ENCODE measurements at regions of chr9 and their contacts with region 1.

Region 1: DNA sequence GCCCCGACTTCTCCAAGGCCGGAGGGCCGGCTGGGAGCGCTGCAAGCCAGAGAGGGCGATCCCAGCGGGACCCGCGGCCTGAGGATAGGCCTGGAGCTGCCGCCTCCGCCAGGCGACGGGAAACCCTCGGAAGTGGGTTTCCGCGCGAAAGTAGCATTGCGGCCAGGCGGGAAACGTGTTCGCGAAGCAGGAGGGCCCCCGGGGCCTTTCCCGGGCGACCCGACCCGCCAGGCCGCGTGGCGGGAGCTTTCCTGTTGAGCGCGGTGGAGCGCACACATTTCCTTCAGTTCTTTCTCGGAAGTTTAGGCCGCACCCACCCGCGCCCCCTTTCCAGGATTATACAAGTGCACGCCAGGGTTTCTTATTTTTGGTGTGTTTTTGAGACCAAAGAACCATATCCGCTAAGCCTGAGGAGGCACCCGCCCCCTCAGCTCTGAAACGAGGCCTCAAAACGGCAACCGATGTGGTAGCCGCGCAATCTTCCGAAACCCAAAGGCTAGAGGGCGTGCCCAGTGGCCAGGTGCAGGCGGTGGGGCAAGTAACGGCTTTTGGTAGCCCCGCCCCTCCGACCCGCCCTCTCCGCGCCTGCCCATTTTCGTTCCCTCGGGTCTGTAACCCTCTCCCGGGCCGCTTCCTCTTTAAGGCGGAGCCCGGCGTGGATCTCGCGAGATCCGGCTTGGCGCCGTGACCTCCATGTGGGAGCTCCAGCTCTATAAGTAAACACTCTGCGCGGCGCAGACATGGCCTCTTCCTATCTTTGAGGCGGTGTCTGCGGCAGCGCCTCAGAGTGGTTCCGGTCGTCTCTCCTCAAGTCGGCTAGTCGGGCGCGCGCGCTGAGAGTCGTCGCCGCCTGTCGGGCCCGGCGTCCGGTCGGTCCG is at the start of gene UHRF2:
- DNase-seq: peak; percentile 97
- H3K4me3 ChIP-seq: peak within 1 kb of the TSS; percentile 53 to 100 (median 98)
- H3K27ac ChIP-seq: peak within 1 kb of the TSS; percentile 91
- H3K4me1 ChIP-seq: peaks cover 24% of the 10 kb centered on the region
- H3K27me3 ChIP-seq: peaks cover 0 to 3% of the 10 kb centered on the region in 2 experiments
- CTCF ChIP-seq: peak in 1 of 2 donors; percentile 4
- POLR2A ChIP-seq: peak; percentile 89
- total RNA-seq, gene UHRF2: 101 and 106 TPM in 2 replicates

Region 2: GRCh38 chr9:6008169-6008979 is 404.4 kb before region 1 on chr9:
- CTCF ChIA-PET with region 1: no interaction called
- POLR2A ChIA-PET with region 1: no interaction called
- dilution Hi-C with region 1: no loop called
- intact Hi-C with region 1: loop called (anchors 5 kb)
- DNase-seq: peak; percentile 98
- H3K4me3 ChIP-seq: peak overlapping the region; percentile 65 to 98 (median 89)
- H3K27ac ChIP-seq: peak overlapping the region; percentile 60
- H3K4me1 ChIP-seq: peaks cover 22% of the 10 kb centered on the region
- H3K27me3 ChIP-seq: no peaks in the 10 kb centered on the region
- CTCF ChIP-seq: no peak
- POLR2A ChIP-seq: peak; percentile 50

Region 3: GRCh38 chr9:6024020-6024554 is 388.6 kb before region 1 on chr9:
- CTCF ChIA-PET with region 1: no interaction called
- POLR2A ChIA-PET with region 1: no interaction called
- dilution Hi-C with region 1: no loop called
- intact Hi-C with region 1: no loop called
- DNase-seq: peak; percentile 22
- H3K4me3 ChIP-seq: peak overlapping the region in 1 of 3 experiments; percentile 11
- H3K27ac ChIP-seq: no peak overlapping the region
- H3K4me1 ChIP-seq: no peaks in the 10 kb centered on the region
- H3K27me3 ChIP-seq: peaks cover 1 to 13% of the 10 kb centered on the region in 2 experiments
- CTCF ChIP-seq: peak; percentile 46 to 48
- POLR2A ChIP-seq: no peak

Region 4: DNA sequence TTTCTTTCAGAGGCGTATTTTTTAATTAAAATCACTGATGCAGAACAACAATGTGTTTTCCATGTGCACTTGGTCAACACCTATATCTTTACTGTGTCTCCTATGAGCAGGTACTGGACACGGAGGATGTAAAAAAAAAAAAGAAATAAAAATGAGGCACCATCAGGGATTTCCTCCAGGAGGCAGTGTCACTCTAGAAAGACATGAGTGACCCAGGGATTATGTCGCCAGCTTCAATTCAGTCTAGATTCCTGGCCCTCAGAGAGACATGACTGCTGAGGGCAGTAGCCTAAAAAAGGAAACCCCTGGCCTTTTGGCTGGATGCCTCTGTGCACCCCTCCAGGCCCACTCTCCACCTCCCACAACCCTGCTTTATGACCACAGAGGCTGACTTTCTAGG is 215.4 kb before region 1 on chr9:
- CTCF ChIA-PET with region 1: no interaction called
- POLR2A ChIA-PET with region 1: no interaction called
- dilution Hi-C with region 1: no loop called
- intact Hi-C with region 1: loop called (anchors 10 kb)
- DNase-seq: peak; percentile 67
- H3K4me3 ChIP-seq: no peak overlapping the region
- H3K27ac ChIP-seq: no peak overlapping the region
- H3K4me1 ChIP-seq: peaks cover 18% of the 10 kb centered on the region
- H3K27me3 ChIP-seq: no peaks in the 10 kb centered on the region
- CTCF ChIP-seq: peak; percentile 29 to 42
- POLR2A ChIP-seq: no peak

Region 5: GRCh38 chr9:6353851-6354686 is 58.7 kb before region 1 on chr9:
- CTCF ChIA-PET with region 1: interaction called, 20 read pairs
- POLR2A ChIA-PET with region 1: no interaction called
- dilution Hi-C with region 1: no loop called
- intact Hi-C with region 1: loop called (anchors 2 kb)
- DNase-seq: peak; percentile 72
- H3K4me3 ChIP-seq: no peak overlapping the region
- H3K27ac ChIP-seq: no peak overlapping the region
- H3K4me1 ChIP-seq: peaks cover 4% of the 10 kb centered on the region
- H3K27me3 ChIP-seq: no peaks in the 10 kb centered on the region
- CTCF ChIP-seq: peak; percentile 67 to 69
- POLR2A ChIP-seq: no peak

Region 6: GRCh38 chr9:6449645-6450044 is 36.9 kb after region 1 on chr9:
- CTCF ChIA-PET with region 1: interaction called, 7 read pairs
- POLR2A ChIA-PET with region 1: no interaction called
- dilution Hi-C with region 1: no loop called
- intact Hi-C with region 1: loop called (anchors 2 kb)
- DNase-seq: peak; percentile 42
- H3K4me3 ChIP-seq: no peak overlapping the region
- H3K27ac ChIP-seq: peak overlapping the region; percentile 66
- H3K4me1 ChIP-seq: peaks cover 38% of the 10 kb centered on the region
- H3K27me3 ChIP-seq: no peaks in the 10 kb centered on the region
- CTCF ChIP-seq: no peak
- POLR2A ChIP-seq: no peak

Region 7: GRCh38 chr9:6488395-6488794 is 75.7 kb after region 1 on chr9:
- CTCF ChIA-PET with region 1: no interaction called
- POLR2A ChIA-PET with region 1: no interaction called
- dilution Hi-C with region 1: no loop called
- intact Hi-C with region 1: loop called (anchors 5 kb)
- DNase-seq: no peak
- H3K4me3 ChIP-seq: no peak overlapping the region
- H3K27ac ChIP-seq: no peak overlapping the region
- H3K4me1 ChIP-seq: no peaks in the 10 kb centered on the region
- H3K27me3 ChIP-seq: no peaks in the 10 kb centered on the region
- CTCF ChIP-seq: no peak
- POLR2A ChIP-seq: no peak

Region 8: GRCh38 chr9:6566409-6567139 is 153.8 kb after region 1 on chr9:
- CTCF ChIA-PET with region 1: interaction called, 23 read pairs
- POLR2A ChIA-PET with region 1: interaction called, 3 read pairs
- dilution Hi-C with region 1: no loop called
- intact Hi-C with region 1: loop called (anchors 1 kb)
- DNase-seq: peak; percentile 98
- H3K4me3 ChIP-seq: peak overlapping the region in 1 of 3 experiments; percentile 12
- H3K27ac ChIP-seq: peak overlapping the region; percentile 99
- H3K4me1 ChIP-seq: peaks cover 58% of the 10 kb centered on the region
- H3K27me3 ChIP-seq: no peaks in the 10 kb centered on the region
- CTCF ChIP-seq: peak in 1 of 2 donors; percentile 12
- POLR2A ChIP-seq: peak; percentile 82

Measured in endothelial cell of umbilical vein (primary cell).